MCF 10A (cell line): ENCODE measurements at regions of chr5 and their contacts with region 1.

Region 1: DNA sequence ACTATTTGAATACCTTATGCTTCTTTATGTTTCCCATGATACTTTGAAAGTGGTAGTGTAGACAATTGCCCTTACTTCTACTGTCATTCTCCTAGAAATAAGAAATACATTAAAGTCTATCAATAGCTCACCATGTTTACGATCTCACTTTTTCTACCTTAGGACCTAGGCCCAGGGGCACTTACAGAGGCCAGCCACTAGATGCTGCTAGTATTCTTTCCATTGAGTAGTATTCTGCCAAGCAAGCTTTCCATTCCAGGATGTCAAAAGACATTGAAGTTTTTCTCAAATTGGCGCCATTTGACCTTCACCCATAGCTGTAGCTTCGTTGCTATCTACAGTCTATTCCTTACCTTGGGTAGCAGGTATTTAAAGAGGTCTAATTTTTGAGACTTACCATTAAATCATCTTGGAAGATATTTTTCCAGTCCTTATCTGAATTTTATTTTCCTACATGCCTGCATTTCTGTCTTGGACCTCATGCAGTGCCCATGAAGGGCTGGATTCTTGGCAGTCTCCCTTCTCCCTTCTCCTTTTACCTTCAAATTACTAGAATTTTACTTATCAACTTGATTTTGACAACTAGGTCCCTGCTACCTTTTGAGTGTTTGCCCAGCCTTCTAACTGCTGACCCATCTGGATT is 246.0 kb upstream of the NUDT12 start:
- DNase-seq: peak; percentile 57
- H3K4me3 Mint-ChIP-seq: no peak overlapping the region
- H3K27ac Mint-ChIP-seq: no peak overlapping the region
- H3K4me1 Mint-ChIP-seq: no peaks in the 10 kb centered on the region
- H3K27me3 Mint-ChIP-seq: no peaks in the 10 kb centered on the region
- CTCF ChIP-seq: peak; percentile 88

Region 2: GRCh38 chr5:103582364-103582763 is 226.2 kb before region 1 on chr5:
- CTCF ChIA-PET with region 1: interaction called, 25 read pairs
- POLR2A ChIA-PET with region 1: no interaction called
- intact Hi-C with region 1: loop called (anchors 1 kb)
- DNase-seq: peak; percentile 63
- H3K4me3 Mint-ChIP-seq: no peak overlapping the region
- H3K27ac Mint-ChIP-seq: no peak overlapping the region
- H3K4me1 Mint-ChIP-seq: no peaks in the 10 kb centered on the region
- H3K27me3 Mint-ChIP-seq: peaks cover 29% of the 10 kb centered on the region
- CTCF ChIP-seq: peak; percentile 38

Region 3: DNA sequence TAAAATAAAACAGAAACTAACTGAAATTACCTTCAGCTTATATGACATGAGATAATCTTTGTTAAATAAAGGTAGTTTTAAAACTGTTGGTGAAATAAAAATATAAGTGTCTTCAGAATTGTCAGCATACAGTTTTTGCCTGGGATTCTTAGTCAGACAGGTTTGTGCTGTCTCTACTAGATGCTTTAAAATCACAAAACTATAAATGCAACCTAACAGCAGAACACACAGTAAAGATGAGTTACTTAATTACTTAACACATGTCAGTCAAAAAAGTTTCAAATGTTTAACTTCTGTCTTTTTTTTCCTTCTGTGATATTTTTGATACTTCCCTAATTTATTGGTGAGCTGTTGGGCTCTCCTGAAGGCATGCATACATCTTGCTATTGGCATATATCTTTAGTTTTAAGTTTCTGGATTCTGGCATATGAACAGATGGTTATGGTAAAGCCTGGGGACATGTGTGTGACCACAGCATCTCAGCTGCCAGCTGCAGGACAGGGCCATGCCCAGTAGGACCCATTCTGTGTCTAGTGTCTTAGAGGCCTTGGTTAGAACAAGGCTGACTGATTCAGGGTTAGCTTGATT is 14.9 kb before region 1 on chr5:
- CTCF ChIA-PET with region 1: interaction called, 12 read pairs
- POLR2A ChIA-PET with region 1: no interaction called
- intact Hi-C with region 1: no loop called
- DNase-seq: no peak
- H3K4me3 Mint-ChIP-seq: no peak overlapping the region
- H3K27ac Mint-ChIP-seq: no peak overlapping the region
- H3K4me1 Mint-ChIP-seq: no peaks in the 10 kb centered on the region
- H3K27me3 Mint-ChIP-seq: no peaks in the 10 kb centered on the region
- CTCF ChIP-seq: no peak

Region 4: GRCh38 chr5:103821361-103821760 is 12.8 kb after region 1 on chr5:
- CTCF ChIA-PET with region 1: interaction called, 12 read pairs
- POLR2A ChIA-PET with region 1: no interaction called
- intact Hi-C with region 1: no loop called
- DNase-seq: peak; percentile 6
- H3K4me3 Mint-ChIP-seq: no peak overlapping the region
- H3K27ac Mint-ChIP-seq: no peak overlapping the region
- H3K4me1 Mint-ChIP-seq: no peaks in the 10 kb centered on the region
- H3K27me3 Mint-ChIP-seq: no peaks in the 10 kb centered on the region
- CTCF ChIP-seq: no peak

Region 5: DNA sequence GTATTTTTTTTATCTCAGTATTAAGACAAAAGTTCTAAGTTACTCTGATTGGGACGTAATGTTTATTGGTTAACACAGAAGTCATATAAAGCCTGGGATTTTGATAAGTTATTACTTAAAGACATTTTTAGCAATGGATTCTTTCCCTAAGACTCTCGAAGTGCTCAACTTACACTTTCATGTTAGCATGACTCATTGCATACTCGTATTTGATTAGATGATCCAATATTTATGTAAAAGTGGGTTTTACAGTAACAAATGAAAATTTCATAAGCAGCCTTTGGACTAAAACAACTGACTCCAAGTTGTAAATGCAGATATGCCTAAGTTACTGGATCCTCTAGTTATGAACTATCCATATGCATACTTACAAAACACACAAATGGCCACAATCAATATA is 321.7 kb after region 1 on chr5:
- CTCF ChIA-PET with region 1: no interaction called
- POLR2A ChIA-PET with region 1: no interaction called
- intact Hi-C with region 1: no loop called
- DNase-seq: no peak
- H3K4me3 Mint-ChIP-seq: no peak overlapping the region
- H3K27ac Mint-ChIP-seq: no peak overlapping the region
- H3K4me1 Mint-ChIP-seq: no peaks in the 10 kb centered on the region
- H3K27me3 Mint-ChIP-seq: no peaks in the 10 kb centered on the region
- CTCF ChIP-seq: no peak

Region 6: DNA sequence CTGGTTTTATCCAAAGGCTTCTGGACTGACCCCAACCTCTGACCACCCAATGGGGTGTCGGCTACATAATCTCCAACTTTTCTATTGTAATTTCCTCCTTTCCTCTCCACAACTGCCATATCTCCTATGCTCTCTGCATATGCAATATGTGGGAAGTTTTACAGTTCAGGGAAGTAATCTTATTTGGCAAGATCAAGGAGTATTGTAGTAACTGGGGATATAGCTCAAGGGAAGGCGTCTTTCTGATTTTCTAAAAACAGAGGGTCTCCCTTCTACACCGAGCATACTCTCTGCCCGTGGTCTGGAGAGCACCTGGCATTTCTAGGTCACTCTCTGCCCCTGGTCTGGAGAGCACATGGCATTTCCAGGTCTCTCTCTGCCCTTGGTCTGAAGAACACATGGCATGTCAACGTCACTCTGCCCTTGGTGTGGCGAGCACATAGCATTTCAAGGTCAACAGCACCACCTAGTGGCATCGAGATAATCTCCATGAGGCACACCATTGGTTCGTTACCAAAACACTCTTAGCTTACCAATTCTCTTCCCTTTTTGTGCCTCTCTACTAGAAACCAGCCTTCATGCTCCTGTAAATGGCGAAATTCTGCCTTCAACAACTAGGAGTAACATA is 370.4 kb after region 1 on chr5:
- CTCF ChIA-PET with region 1: interaction called, 14 read pairs
- POLR2A ChIA-PET with region 1: no interaction called
- intact Hi-C with region 1: loop called (anchors 1 kb)
- DNase-seq: peak; percentile 64
- H3K4me3 Mint-ChIP-seq: no peak overlapping the region
- H3K27ac Mint-ChIP-seq: no peak overlapping the region
- H3K4me1 Mint-ChIP-seq: peaks cover 6% of the 10 kb centered on the region
- H3K27me3 Mint-ChIP-seq: no peaks in the 10 kb centered on the region
- CTCF ChIP-seq: peak; percentile 60